Heart right ventricle (tissue), 16 donors: ENCODE measurements at regions of chr19 and their contacts with region 1.

Region 1: GRCh38 chr19:56507446-56508289 is at the start of gene ZNF471:
- DNase-seq: peak; percentile 99
- ATAC-seq: peak; percentile 100
- H3K4me3 ChIP-seq: peak within 1 kb of the TSS; percentile 48 to 85 (median 71)
- H3K27ac ChIP-seq: peak within 1 kb of the TSS; percentile 93 to 99 (median 98)
- H3K4me1 ChIP-seq: peaks cover 0 to 17% (median 11%) of the 10 kb centered on the region in 9 donors
- H3K27me3 ChIP-seq: no peaks in the 10 kb centered on the region
- CTCF ChIP-seq: no peak
- total RNA-seq, gene ZNF471: 3.9 to 7.7 (median 5.5) TPM

Region 2: GRCh38 chr19:56538254-56538760 is 30.6 kb after region 1 on chr19:
- intact Hi-C with region 1: loop called in 3 of 10 experiments (anchors 1 to 2 kb)
- DNase-seq: peak; percentile 94 to 95
- ATAC-seq: peak; percentile 97 to 100 (median 99)
- H3K4me3 ChIP-seq: peak overlapping the region; percentile 59 to 93 (median 75)
- H3K27ac ChIP-seq: peak overlapping the region; percentile 87 to 99 (median 95)
- H3K4me1 ChIP-seq: peaks cover 0 to 22% (median 14%) of the 10 kb centered on the region in 9 donors
- H3K27me3 ChIP-seq: no peaks in the 10 kb centered on the region
- CTCF ChIP-seq: no peak